IMR-90 (cell line): ENCODE measurements at regions of chr3 and their contacts with region 1.

Region 1: DNA sequence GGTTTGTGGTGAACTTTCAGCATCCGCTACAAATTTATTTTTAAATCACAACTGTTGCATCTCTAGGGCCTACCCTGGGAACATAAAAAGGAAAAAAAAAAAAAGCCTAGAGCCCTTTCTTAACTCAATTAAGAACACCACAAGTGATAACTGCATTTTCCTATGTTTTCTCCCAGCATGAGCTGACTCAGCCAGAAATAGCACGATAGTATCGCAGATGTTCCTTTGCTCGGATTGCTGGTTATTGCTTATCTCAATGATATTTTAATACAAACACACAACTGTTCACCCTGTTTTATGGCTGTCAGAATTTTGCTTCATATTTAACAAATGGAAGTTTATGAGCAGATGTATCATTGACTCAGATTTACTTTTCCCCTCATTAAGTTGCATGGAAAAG is 251.8 kb upstream of the SUCLG2 start:
- DNase-seq: no peak
- ATAC-seq: no peak
- H3K4me3 ChIP-seq: no peak overlapping the region
- H3K27ac ChIP-seq: no peak overlapping the region
- H3K4me1 ChIP-seq: no peaks in the 10 kb centered on the region
- H3K27me3 ChIP-seq: no peaks in the 10 kb centered on the region
- CTCF ChIP-seq: no peak
- POLR2A ChIP-seq: no peak
- RAD21 ChIP-seq: no peak

Region 2: DNA sequence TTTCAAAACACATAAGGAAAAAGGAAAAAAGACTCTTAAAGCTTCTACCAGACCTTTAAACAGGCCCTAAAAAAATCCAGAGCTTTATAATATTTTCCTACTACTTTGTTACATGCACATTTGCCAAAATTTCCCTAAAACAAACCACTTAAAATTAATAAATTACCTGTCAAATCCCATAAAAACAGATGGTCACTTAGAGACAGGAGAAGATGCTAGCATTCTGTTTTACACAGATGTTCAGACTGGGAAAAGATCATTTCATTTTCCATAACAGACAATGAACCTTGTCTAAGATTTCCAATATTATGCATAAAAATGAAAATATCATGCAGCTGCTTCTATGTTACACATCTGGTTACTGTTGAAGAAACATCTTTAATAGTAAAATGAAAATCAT is 318.4 kb before region 1 on chr3:
- CTCF ChIA-PET with region 1: interaction called, 10 read pairs
- POLR2A ChIA-PET with region 1: no interaction called
- dilution Hi-C with region 1: no loop called
- in situ Hi-C with region 1: no loop called
- intact Hi-C with region 1: no loop called
- DNase-seq: no peak
- ATAC-seq: no peak
- H3K4me3 ChIP-seq: no peak overlapping the region
- H3K27ac ChIP-seq: no peak overlapping the region
- H3K4me1 ChIP-seq: no peaks in the 10 kb centered on the region
- H3K27me3 ChIP-seq: no peaks in the 10 kb centered on the region
- CTCF ChIP-seq: no peak
- POLR2A ChIP-seq: no peak
- RAD21 ChIP-seq: no peak

Region 3: DNA sequence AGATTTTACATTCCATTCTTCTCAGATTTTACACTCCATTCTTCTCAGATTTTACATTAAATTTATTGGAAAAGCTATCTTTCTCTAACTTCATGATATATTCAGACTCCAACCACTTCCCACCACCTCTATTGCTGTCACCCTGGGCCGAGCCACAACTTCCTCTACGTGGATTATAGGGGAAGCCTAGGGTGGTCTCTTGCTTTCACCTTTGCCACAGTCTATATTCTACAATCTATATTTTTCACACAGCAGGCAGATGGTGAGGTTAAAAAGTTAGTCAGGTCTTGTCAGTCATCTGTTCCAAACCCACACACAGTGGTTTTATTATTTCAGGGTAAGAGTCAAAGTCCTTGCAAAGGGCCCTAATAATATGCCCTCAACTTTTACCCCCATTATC is 118.9 kb after region 1 on chr3:
- CTCF ChIA-PET with region 1: no interaction called
- POLR2A ChIA-PET with region 1: no interaction called
- dilution Hi-C with region 1: no loop called
- in situ Hi-C with region 1: no loop called
- intact Hi-C with region 1: no loop called
- DNase-seq: no peak
- ATAC-seq: no peak
- H3K4me3 ChIP-seq: no peak overlapping the region
- H3K27ac ChIP-seq: no peak overlapping the region
- H3K4me1 ChIP-seq: no peaks in the 10 kb centered on the region
- H3K27me3 ChIP-seq: no peaks in the 10 kb centered on the region
- CTCF ChIP-seq: no peak
- POLR2A ChIP-seq: no peak
- RAD21 ChIP-seq: no peak